Head of caudate nucleus (tissue), 42 donors: ENCODE measurements at regions of chr17 and their contacts with region 1.

Region 1: GRCh38 chr17:58517734-58518609 is 3.5 kb upstream of the MTMR4 start:
- DNase-seq: peak; percentile 99 to 100 (median 100)

Region 2: DNA sequence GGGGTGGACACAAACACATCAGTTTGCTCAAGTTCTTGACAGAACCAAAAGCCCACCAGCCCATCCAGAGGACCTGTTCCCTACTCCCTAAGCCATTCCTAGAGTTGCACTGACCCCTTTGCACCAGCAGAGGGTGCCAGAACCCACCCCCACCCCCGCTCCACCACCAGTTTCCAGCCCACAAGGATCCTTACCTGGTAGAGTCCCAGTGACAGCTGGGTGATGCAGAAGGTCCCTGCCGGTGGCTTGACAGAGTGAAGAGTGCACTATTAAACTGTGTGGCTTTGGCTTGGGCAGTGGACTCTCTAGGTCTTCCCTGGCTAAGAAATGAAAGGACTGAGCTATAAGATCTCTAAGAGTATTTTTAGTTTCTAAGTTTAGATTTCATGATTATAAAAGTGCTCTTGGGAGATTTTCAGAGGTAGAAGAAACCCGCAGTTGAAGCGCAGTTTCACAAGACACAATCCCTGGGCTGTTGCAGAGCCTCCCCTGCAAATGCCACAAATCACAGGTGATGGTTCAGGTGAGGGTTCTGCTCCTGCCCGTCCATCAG is 69.8 kb after region 1 on chr17:
- intact Hi-C with region 1: loop called (anchors 10 kb)
- DNase-seq: peak in 41 of 42 donors; percentile 14 to 84 (median 58)

Region 3: GRCh38 chr17:58631523-58632323 is 113.8 kb after region 1 on chr17:
- intact Hi-C with region 1: loop called (anchors 2 kb)
- DNase-seq: peak; percentile 85 to 98 (median 95)

Region 4: DNA sequence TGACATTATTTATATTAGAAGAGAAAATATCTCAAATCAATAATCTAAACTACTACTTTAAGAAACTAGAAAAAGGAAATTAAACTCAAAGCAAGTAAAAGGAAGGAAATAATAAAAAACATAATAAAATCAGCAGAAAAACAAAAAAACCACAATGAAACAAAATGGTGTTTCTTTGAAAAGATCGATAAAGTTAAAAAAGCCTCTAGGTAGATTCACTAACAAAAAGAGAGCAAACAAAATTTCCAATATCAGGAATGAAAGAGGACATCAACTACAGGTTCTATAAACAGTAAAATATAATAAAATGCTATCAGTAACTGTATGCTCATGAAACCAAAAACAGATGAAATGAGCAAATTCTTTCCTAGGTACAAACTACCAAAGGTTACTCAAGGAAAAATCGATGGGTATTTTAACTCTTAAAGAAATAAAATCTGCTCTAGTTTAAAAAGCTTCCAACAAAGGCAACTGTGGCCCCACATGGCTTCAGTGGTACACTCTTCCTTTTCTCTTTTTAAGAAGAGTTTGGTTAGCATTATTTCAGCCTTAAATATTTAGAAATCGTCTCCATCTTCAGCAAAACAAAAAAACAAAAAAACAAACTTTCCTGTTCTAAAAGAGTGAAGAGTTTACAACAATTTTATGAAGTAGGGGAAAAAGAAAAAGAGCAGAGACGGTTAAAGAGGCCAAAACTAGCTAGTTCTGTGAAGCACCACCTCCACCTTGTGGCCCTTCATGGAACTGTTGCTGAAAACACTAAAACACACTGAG is 486.6 kb after region 1 on chr17:
- intact Hi-C with region 1: loop called (anchors 5 kb)
- DNase-seq: peak in 40 of 42 donors; percentile 15 to 90 (median 67)